ENCODE measurements at regions of chr16 and their contacts with region 1.

Region 1: DNA sequence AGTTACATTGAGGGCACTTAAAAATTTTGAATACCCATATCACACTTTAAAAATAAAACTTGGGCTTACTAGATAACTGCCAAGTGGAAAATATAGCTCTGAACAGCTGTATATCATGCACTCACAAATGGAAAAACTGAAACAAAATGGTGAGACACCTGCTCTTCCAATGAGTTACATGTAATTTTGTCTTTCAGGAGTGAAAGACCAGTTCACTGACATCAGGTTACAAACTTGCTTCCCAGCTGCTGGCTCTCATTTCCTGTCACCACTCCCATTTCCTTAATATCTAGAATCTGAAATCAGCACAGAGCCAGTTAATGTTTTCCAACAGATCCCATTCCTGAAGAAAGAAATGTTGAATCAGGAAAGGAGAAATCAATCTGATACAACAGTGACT is 10.8 kb downstream of the CSNK2A2 start:
- DNase-seq: no peak

Region 2: GRCh38 chr16:58137581-58137980 is 49.5 kb before region 1 on chr16:
- intact Hi-C with region 1: loop called (anchors 10 kb)
- DNase-seq: no peak

Region 3: DNA sequence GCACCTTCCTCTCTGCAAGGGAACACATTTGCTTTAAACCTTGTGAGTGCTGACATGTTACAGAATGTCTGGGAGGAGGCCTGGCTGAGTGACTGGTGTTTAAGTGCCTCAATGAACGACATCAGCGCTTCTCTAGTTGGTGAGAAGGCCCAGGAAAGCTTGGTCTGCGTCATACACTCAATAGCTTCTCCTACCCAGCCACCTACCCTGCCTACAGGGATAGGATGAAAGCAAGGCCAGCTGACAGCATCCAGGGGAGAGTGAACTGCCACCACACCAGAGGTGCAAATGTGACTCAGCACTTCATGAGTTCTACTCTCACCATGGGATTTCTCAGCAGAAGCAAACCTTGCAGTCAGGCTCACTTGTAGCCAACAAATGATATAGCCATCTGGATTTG is 26.2 kb before region 1 on chr16:
- intact Hi-C with region 1: no loop called
- DNase-seq: no peak